Panc1 (cell line): ENCODE measurements at regions of chr6 and their contacts with region 1.

Region 1: DNA sequence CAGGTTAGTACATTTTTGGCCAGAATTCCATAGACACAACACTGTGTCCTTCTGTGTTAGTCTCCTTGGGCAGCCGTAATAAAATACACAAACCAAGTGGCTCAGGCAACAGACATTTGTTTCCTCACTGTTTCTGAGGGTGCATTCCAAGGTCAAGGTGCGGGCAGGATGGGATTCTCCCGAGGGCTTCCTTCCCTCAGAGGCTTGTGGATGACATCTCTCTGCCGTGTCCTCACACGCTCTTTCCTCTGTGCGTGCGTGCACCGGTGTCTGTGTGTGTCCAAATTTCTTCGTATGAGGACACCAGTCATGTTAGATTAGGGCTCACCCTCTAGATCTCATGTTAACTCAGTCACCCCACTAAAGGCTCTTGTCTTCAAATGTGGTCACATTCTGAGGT is 30.6 kb downstream of the CDYL start:
- DNase-seq: no peak
- ATAC-seq: no peak
- H3K4me3 ChIP-seq: no peak overlapping the region
- H3K27ac ChIP-seq: no peak overlapping the region
- H3K4me1 ChIP-seq: peaks cover 15% of the 10 kb centered on the region
- H3K27me3 ChIP-seq: no peaks in the 10 kb centered on the region
- CTCF ChIP-seq: no peak

Region 2: DNA sequence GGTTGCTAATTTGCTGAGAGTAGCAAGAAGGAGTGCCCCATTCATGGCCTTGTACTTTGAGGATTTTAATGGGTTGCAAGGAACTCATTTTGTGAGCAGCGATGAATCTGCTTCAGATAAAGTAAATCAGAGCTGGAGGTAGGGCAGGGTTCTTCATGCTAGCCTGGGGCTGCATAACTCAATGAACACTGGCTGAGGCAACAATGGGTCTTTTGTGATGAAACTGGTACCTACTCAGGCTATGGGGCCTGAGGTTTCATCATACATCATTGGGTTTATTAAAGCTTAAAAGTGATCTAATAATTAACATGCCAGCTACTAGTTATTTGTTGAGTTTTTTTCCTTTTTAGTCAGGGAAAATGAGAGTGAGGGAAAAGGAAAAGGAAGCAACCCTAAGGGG is 850.7 kb before region 1 on chr6:
- CTCF ChIA-PET with region 1: no interaction called
- POLR2A ChIA-PET with region 1: no interaction called
- in situ Hi-C with region 1: no loop called
- intact Hi-C with region 1: no loop called
- DNase-seq: no peak
- ATAC-seq: no peak
- H3K4me3 ChIP-seq: no peak overlapping the region
- H3K27ac ChIP-seq: no peak overlapping the region
- H3K4me1 ChIP-seq: no peaks in the 10 kb centered on the region
- H3K27me3 ChIP-seq: no peaks in the 10 kb centered on the region
- CTCF ChIP-seq: no peak

Region 3: GRCh38 chr6:4714961-4715501 is 91.8 kb before region 1 on chr6:
- CTCF ChIA-PET with region 1: no interaction called
- POLR2A ChIA-PET with region 1: interaction called, 13 read pairs
- in situ Hi-C with region 1: no loop called
- intact Hi-C with region 1: no loop called
- DNase-seq: no peak
- ATAC-seq: no peak
- H3K4me3 ChIP-seq: no peak overlapping the region
- H3K27ac ChIP-seq: no peak overlapping the region
- H3K4me1 ChIP-seq: no peaks in the 10 kb centered on the region
- H3K27me3 ChIP-seq: no peaks in the 10 kb centered on the region
- CTCF ChIP-seq: no peak

Region 4: GRCh38 chr6:4751823-4752467 is 54.8 kb before region 1 on chr6:
- CTCF ChIA-PET with region 1: no interaction called
- POLR2A ChIA-PET with region 1: no interaction called
- in situ Hi-C with region 1: no loop called
- intact Hi-C with region 1: no loop called
- DNase-seq: no peak
- ATAC-seq: no peak
- H3K4me3 ChIP-seq: no peak overlapping the region
- H3K27ac ChIP-seq: no peak overlapping the region
- H3K4me1 ChIP-seq: no peaks in the 10 kb centered on the region
- H3K27me3 ChIP-seq: peaks cover 1% of the 10 kb centered on the region; the same call in 1 of the 2 replicates
- CTCF ChIP-seq: no peak